Activated CD4-positive, alpha-beta T cell treated with anti-CD3 and anti-CD28 coated beads, Interleukin-2, amount 10 ng/mL, durations not matched to agents 24 days and 14 days (primary cell): ENCODE measurements at regions of chr11 and their contacts with region 1.

Region 1: GRCh38 chr11:78325274-78325781 is 92.3 kb downstream of the GAB2 start:
- DNase-seq: peak; percentile 83
- H3K4me3 Mint-ChIP-seq: peak overlapping the region; percentile 53
- H3K27ac Mint-ChIP-seq: peak overlapping the region; percentile 87
- H3K4me1 Mint-ChIP-seq: peaks cover 74% of the 10 kb centered on the region
- H3K27me3 Mint-ChIP-seq: no peaks in the 10 kb centered on the region

Region 2: GRCh38 chr11:78228467-78228866 is 96.9 kb before region 1 on chr11:
- intact Hi-C with region 1: loop called (anchors 5 kb)
- DNase-seq: peak; percentile 83
- H3K4me3 Mint-ChIP-seq: no peak overlapping the region
- H3K27ac Mint-ChIP-seq: peak overlapping the region; percentile 31
- H3K4me1 Mint-ChIP-seq: peaks cover 59% of the 10 kb centered on the region
- H3K27me3 Mint-ChIP-seq: no peaks in the 10 kb centered on the region

Region 3: DNA sequence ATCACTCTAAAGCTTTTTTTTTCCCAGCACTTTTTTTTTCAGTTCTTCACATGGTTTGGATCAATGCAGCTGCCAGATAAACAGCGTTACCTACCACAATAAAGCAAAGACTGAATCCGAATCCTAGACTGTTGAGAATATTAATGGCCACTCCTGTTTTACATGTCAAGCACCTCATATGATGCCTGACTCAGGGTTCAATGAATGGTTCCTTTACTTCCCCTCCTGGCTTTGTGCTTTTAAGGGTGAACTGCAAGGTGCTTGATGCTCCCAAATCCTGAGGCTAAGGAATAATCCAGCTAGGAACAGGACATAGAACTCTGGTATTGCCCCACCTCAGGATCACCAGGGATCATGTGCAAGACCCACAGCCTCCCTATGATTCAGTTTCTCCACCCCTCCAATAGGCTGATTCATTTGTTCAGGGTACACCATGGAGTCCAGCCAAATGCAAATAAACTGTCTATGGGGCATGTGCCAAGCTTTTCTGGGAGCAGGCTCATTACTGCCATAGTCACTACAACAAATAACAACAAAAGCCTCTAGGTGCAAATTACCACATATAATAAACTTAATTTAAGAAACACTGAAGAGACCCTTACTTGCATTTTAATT is 12.0 kb before region 1 on chr11:
- intact Hi-C with region 1: loop called (anchors 1 kb)
- DNase-seq: no peak
- H3K4me3 Mint-ChIP-seq: no peak overlapping the region
- H3K27ac Mint-ChIP-seq: no peak overlapping the region
- H3K4me1 Mint-ChIP-seq: peaks cover 52% of the 10 kb centered on the region
- H3K27me3 Mint-ChIP-seq: no peaks in the 10 kb centered on the region

Region 4: GRCh38 chr11:78338138-78338537 is 12.8 kb after region 1 on chr11:
- intact Hi-C with region 1: loop called (anchors 1 kb)
- DNase-seq: no peak
- H3K4me3 Mint-ChIP-seq: peak overlapping the region; percentile 12
- H3K27ac Mint-ChIP-seq: peak overlapping the region; percentile 94
- H3K4me1 Mint-ChIP-seq: peaks cover 73% of the 10 kb centered on the region
- H3K27me3 Mint-ChIP-seq: no peaks in the 10 kb centered on the region